ENCODE measurements at regions of chr18 and their contacts with region 1.

Region 1: DNA sequence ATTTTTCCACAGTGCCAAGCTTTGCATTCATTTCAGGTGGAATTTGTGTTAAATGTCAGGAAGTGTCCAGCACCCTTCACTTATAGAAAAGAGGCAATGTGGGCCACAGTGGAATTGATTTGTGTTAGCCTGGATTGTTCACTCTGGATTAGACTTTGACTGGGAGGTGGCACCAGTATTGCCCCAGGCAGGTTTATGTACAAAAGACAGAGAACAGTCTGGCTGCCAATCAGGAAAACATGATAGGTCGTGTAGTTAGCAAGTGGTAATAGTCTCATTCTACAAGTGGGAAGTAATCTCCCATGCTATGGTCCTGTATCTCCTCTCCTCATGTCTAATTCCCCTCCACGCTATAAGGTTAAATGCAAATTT is 45.6 kb downstream of the RAB27B start:
- DNase-seq: no peak
- H3K4me3 ChIP-seq: no peak overlapping the region
- H3K27ac ChIP-seq: no peak overlapping the region
- H3K4me1 ChIP-seq: no peaks in the 10 kb centered on the region
- H3K27me3 ChIP-seq: peaks cover 10% of the 10 kb centered on the region
- CTCF ChIP-seq: no peak

Region 2: GRCh38 chr18:55351980-55352714 is 478.3 kb after region 1 on chr18:
- CTCF ChIA-PET with region 1: no interaction called
- POLR2A ChIA-PET with region 1: interaction called, 12 read pairs
- intact Hi-C with region 1: no loop called
- DNase-seq: peak; percentile 87
- H3K4me3 ChIP-seq: peak overlapping the region; percentile 4
- H3K27ac ChIP-seq: peak overlapping the region; percentile 78
- H3K4me1 ChIP-seq: peaks cover 98% of the 10 kb centered on the region
- H3K27me3 ChIP-seq: no peaks in the 10 kb centered on the region
- CTCF ChIP-seq: no peak